ENCODE measurements at regions of chr1 and their contacts with region 1.

Region 1: DNA sequence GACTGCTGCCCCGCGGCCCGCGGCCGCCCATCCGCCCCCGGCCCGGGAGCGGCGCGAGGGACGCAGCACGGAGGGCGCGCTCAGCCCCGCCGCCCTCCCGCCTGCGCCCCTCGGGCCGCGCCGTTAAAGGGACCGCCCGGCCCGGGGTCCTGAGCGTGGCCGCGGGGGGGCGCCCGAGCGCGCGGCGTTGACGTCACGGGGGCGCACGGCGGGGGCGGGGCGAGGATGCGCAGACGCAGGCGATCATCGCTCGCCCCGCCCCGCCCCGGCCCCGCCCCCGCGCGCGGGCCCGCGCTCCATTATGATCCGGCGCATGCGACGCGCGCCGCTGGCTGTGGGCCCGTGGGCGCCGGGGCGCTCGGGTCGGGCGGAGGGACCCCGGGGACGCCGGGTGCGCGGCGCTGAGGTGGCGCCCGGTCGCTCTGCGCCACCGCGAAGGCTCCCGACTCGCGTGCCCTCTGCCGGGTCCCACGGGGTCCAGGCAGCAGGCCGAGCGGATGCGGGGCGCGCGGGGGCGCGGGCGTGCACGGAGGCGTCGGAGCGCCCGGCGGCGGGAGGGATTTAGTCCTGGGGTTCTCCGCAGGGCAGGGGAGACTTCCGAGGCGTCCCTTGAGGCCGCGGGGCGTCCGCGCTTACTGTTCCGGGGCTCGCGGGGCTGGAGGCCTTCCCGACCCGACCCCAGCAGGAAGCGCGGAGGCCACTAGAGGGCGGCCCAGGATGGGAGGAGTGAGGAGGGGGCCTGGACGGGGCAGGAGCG is at the start of gene DVL1:
- DNase-seq: no peak
- ATAC-seq: peak; percentile 48 to 57
- H3K4me3 ChIP-seq: peak within 1 kb of the TSS; percentile 61 to 89 (median 72)
- H3K27ac ChIP-seq: peak within 1 kb of the TSS; percentile 96 to 99 (median 98)
- H3K4me1 ChIP-seq: peaks cover 50 to 58% of the 10 kb centered on the region in 2 donors
- H3K27me3 ChIP-seq: peaks cover 0 to 10% (median 0%) of the 10 kb centered on the region in 3 donors
- CTCF ChIP-seq: peak; percentile 39 to 77 (median 63)
- POLR2A ChIP-seq: peak; percentile 75 to 81
- total RNA-seq, gene DVL1: 196 to 311 (median 258) TPM

Region 2: GRCh38 chr1:983799-984473 is 365.5 kb before region 1 on chr1:
- in situ Hi-C with region 1: no loop called
- intact Hi-C with region 1: loop called (anchors 5 kb)
- DNase-seq: peak in 1 of 2 donors; percentile 60
- ATAC-seq: no peak
- H3K4me3 ChIP-seq: peak overlapping the region in 3 of 4 donors; percentile 37 to 39 (median 37)
- H3K27ac ChIP-seq: peak overlapping the region; percentile 100
- H3K4me1 ChIP-seq: peaks cover 21 to 27% of the 10 kb centered on the region in 2 donors
- H3K27me3 ChIP-seq: no peaks in the 10 kb centered on the region
- CTCF ChIP-seq: peak; percentile 49 to 99 (median 75)
- POLR2A ChIP-seq: no peak

Region 3: GRCh38 chr1:1307908-1308755 is 41.3 kb before region 1 on chr1 and contains the starts of genes ACAP3 and PUSL1:
- in situ Hi-C with region 1: no loop called
- intact Hi-C with region 1: loop called (anchors 1 kb)
- DNase-seq: peak; percentile 73 to 89
- ATAC-seq: peak; percentile 72 to 77
- H3K4me3 ChIP-seq: peak within 1 kb of the TSS; percentile 67 to 92 (median 75)
- H3K27ac ChIP-seq: peak within 1 kb of the TSS; percentile 88 to 100 (median 96)
- H3K4me1 ChIP-seq: peaks cover 38 to 50% of the 10 kb centered on the region in 2 donors
- H3K27me3 ChIP-seq: no peaks in the 10 kb centered on the region
- CTCF ChIP-seq: peak in 3 of 5 experiments; percentile 20 to 51 (median 30)
- POLR2A ChIP-seq: peak in 1 of 2 donors; percentile 47
- total RNA-seq, gene ACAP3: 18.4 to 31.9 (median 25.8) TPM
- total RNA-seq, gene PUSL1: 6.2 to 13.1 (median 9.5) TPM

Region 4: DNA sequence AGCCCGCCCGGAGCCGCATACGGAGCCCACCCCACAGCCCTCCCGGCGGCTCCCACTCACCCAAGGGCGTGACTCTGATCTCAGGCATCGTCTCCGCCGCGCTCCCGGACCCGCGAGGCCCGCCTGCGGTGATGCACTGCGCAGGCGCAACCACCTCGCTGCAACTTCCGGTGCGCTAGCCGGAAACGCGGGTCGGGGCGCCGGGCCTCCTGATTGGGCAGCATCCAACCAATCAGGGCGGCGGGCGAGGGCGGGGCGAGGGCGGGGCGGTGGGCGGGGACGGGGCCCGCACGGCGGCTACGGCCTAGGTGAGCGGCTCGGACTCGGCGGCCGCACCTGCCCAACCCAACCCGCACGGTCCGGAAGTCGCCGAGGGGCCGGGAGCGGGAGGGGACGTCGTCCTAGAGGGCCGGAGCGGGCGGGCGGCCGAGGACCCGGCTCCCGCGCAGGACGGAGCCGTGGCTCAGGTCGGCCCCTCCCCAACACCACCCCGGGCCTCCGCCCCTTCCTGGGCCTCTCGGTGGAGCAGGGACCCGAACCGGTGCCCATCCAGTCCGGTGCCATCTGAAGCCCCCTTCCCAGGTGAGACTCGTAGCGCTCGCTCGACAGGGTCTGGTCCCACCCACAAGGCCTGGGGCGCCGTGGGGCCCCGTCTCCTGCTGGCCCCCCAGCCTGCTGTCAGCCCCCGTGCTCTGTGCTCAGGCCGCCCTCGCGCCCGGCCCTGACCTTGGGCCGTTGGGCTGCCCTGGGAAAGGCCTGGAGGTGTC is 24.7 kb before region 1 on chr1 and contains the starts of genes CPTP and INTS11:
- in situ Hi-C with region 1: no loop called
- intact Hi-C with region 1: loop called (anchors 2 kb)
- DNase-seq: peak; percentile 91 to 92
- ATAC-seq: peak; percentile 83 to 88
- H3K4me3 ChIP-seq: peak within 1 kb of the TSS; percentile 78 to 95 (median 85)
- H3K27ac ChIP-seq: peak within 1 kb of the TSS; percentile 86 to 97 (median 92)
- H3K4me1 ChIP-seq: peaks cover 43 to 53% of the 10 kb centered on the region in 2 donors
- H3K27me3 ChIP-seq: no peaks in the 10 kb centered on the region
- CTCF ChIP-seq: no peak
- POLR2A ChIP-seq: peak; percentile 76 to 91
- total RNA-seq, gene CPTP: 22.7 to 64.9 (median 34.0) TPM
- total RNA-seq, gene INTS11: 74.0 to 94.4 (median 84.7) TPM

Region 5: GRCh38 chr1:1399187-1399871 is 49.9 kb after region 1 on chr1 and contains the start of gene CCNL2:
- in situ Hi-C with region 1: no loop called
- intact Hi-C with region 1: loop called (anchors 2 kb)
- DNase-seq: peak; percentile 96 to 98
- ATAC-seq: peak; percentile 89 to 93
- H3K4me3 ChIP-seq: peak within 1 kb of the TSS; percentile 65 to 98 (median 84)
- H3K27ac ChIP-seq: peak within 1 kb of the TSS; percentile 80 to 96 (median 92)
- H3K4me1 ChIP-seq: peaks cover 37 to 39% of the 10 kb centered on the region in 2 donors
- H3K27me3 ChIP-seq: no peaks in the 10 kb centered on the region
- CTCF ChIP-seq: peak; percentile 80 to 82 (median 82)
- POLR2A ChIP-seq: peak; percentile 81 to 89
- total RNA-seq, gene CCNL2: 35.0 to 91.1 (median 43.7) TPM

Region 6: GRCh38 chr1:1418463-1419350 is 69.3 kb after region 1 on chr1:
- in situ Hi-C with region 1: no loop called
- intact Hi-C with region 1: no loop called
- DNase-seq: no peak
- ATAC-seq: no peak
- H3K4me3 ChIP-seq: no peak overlapping the region
- H3K27ac ChIP-seq: no peak overlapping the region
- H3K4me1 ChIP-seq: peaks cover 0 to 3% of the 10 kb centered on the region in 2 donors
- H3K27me3 ChIP-seq: no peaks in the 10 kb centered on the region
- CTCF ChIP-seq: no peak
- POLR2A ChIP-seq: no peak

Region 7: GRCh38 chr1:1511533-1512285 is 162.3 kb after region 1 on chr1 and contains the start of gene ATAD3A:
- in situ Hi-C with region 1: no loop called
- intact Hi-C with region 1: loop called (anchors 5 kb)
- DNase-seq: peak; percentile 97 to 98
- ATAC-seq: peak; percentile 92 to 93
- H3K4me3 ChIP-seq: peak within 1 kb of the TSS; percentile 81 to 99 (median 94)
- H3K27ac ChIP-seq: peak within 1 kb of the TSS; percentile 93 to 100 (median 96)
- H3K4me1 ChIP-seq: peaks cover 6 to 13% of the 10 kb centered on the region in 2 donors
- H3K27me3 ChIP-seq: no peaks in the 10 kb centered on the region
- CTCF ChIP-seq: peak in 3 of 5 experiments; percentile 9 to 46 (median 27)
- POLR2A ChIP-seq: peak; percentile 84 to 91
- total RNA-seq, gene ATAD3A: 22.9 to 47.9 (median 35.6) TPM

Measured in gastrocnemius medialis (tissue), 4 donors.